BJ (cell line): ENCODE measurements at regions of chr11 and their contacts with region 1.

Region 1: GRCh38 chr11:125345421-125346178 is 150.5 kb downstream of the FEZ1 start:
- DNase-seq: no peak
- H3K4me3 ChIP-seq: no peak overlapping the region
- H3K27me3 ChIP-seq: peaks cover 4% of the 10 kb centered on the region
- CTCF ChIP-seq: peak; percentile 91

Region 2: GRCh38 chr11:125091247-125091876 is 254.2 kb before region 1 on chr11:
- CTCF ChIA-PET with region 1: interaction called, 16 read pairs
- POLR2A ChIA-PET with region 1: no interaction called
- DNase-seq: no peak
- H3K4me3 ChIP-seq: no peak overlapping the region
- H3K27me3 ChIP-seq: no peaks in the 10 kb centered on the region
- CTCF ChIP-seq: peak; percentile 62

Region 3: DNA sequence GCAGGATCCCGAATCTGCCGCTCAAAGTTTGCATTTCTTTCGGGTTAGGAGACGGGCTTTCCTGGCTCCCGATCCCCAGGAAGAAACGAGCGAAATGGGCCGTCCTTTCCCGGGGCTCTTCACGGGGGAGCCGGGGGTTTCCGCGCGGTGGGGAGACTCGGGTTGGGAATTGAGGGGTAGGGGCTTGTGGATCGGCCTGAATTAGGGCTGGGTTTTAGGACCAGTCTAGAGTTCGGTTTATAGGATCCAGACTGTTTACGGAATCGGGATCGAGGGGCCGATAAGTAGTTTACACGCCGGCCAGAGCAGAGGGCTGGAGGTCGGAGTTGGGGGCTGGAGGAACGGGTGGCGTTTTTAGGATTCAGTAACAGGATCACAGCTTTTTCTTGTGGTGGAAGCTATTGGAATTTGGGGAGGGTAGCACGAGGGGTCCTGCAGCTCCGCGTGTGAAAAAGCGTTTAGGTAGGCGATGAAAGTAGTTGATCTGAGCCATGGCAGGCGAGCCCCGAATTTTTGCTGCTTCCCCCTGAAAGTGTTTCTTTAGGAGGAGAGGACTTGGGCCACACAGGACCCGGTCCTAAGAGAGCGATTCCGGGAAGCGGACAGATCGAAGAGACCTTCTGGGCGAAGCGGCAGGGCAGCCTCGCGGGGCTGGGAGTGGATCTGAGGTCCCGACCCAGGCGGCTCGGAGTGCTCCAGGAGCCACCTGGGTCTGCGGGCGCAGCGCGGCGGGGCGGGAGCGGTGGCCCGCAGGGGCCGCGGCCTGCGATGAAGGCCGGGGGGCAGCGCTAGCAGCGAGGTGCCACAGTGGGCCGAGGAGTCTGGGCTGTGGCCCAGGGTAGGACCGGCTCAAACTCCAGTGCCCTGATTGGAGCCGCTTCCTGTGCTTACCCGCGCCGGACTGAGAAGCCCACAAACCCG is 179.5 kb before region 1 on chr11:
- CTCF ChIA-PET with region 1: interaction called, 24 read pairs
- POLR2A ChIA-PET with region 1: no interaction called
- DNase-seq: no peak
- H3K4me3 ChIP-seq: peak overlapping the region; percentile 40
- H3K27me3 ChIP-seq: peaks cover 52% of the 10 kb centered on the region
- CTCF ChIP-seq: no peak

Region 4: DNA sequence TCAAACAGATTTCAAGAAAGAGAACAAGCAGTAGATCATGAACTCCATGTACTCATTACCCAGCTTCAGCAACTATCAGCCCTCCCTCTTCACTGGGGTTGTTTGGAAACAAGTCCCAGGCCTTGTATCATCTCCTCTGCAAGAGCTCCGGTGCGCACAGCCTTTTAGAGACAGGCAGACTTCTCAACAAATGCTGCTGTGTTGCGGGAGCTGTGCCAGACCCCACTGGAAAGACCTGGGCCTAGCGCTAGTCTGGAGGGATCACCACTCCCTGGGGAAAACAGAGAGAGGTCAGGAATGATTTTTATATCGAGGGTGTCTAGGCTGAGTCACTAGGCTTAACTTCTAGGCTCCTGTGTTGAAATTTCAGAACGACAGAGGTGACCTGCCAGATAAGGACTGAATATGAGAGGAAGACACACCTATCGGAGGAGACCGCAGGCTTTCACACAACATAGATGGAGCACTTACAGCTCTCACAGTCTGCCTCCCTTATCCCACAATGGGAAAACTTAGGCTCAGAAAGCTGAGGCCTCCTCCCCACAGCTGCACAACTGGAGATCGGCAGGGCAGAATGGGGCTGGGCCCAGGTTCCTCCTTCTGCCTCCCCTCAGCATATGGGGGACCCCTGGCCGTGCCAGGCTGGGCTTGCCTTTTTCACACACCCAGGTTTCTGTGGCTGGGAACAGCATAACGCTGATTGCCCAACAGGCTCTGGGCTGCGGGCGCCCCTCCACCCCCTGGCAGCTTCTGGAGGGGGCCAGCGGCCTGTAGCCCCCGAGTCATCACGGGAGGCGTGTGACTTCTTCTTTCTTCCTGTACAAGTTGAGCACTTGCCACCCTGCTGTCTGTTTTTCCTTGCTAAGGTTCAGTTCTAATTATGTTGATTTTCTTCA is 95.0 kb before region 1 on chr11:
- CTCF ChIA-PET with region 1: interaction called, 18 read pairs
- POLR2A ChIA-PET with region 1: no interaction called
- DNase-seq: no peak
- H3K4me3 ChIP-seq: no peak overlapping the region
- H3K27me3 ChIP-seq: peaks cover 2% of the 10 kb centered on the region; the same call in 1 of the 2 replicates
- CTCF ChIP-seq: no peak

Region 5: GRCh38 chr11:125329786-125330185 is 15.8 kb before region 1 on chr11:
- CTCF ChIA-PET with region 1: interaction called, 33 read pairs
- POLR2A ChIA-PET with region 1: no interaction called
- DNase-seq: no peak
- H3K4me3 ChIP-seq: no peak overlapping the region
- H3K27me3 ChIP-seq: peaks cover 22% of the 10 kb centered on the region
- CTCF ChIP-seq: no peak

Region 6: DNA sequence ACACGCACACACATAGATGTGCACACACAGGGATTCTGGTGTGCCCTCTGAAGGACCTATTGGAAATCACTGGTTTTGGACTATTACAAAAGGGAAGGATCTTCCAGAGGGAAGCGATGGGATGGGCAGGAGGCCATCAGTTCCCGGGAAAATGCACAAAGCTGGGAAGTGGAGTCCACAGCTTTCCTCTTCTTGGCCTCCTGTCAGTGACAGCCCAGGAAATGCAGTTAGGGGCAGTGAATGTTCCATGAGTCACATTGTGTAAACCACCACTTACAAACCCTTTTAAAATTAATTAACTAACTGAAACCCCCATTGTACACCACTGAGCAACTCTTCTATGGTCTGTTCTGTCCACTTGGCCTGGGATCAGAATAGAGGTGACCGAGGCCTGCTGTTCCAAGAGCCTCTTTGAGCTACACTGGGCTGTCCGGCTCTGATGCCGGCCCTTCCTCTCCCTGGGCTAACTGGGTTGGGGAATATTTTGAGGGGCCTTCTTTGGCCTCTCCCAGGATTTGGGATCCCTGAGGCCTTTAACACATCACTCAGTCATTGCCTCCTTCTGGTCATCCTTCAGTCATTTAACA is 12.7 kb after region 1 on chr11:
- CTCF ChIA-PET with region 1: interaction called, 45 read pairs
- POLR2A ChIA-PET with region 1: no interaction called
- DNase-seq: no peak
- H3K4me3 ChIP-seq: no peak overlapping the region
- H3K27me3 ChIP-seq: no peaks in the 10 kb centered on the region; the same call in 1 of the 2 replicates
- CTCF ChIP-seq: no peak

Region 7: DNA sequence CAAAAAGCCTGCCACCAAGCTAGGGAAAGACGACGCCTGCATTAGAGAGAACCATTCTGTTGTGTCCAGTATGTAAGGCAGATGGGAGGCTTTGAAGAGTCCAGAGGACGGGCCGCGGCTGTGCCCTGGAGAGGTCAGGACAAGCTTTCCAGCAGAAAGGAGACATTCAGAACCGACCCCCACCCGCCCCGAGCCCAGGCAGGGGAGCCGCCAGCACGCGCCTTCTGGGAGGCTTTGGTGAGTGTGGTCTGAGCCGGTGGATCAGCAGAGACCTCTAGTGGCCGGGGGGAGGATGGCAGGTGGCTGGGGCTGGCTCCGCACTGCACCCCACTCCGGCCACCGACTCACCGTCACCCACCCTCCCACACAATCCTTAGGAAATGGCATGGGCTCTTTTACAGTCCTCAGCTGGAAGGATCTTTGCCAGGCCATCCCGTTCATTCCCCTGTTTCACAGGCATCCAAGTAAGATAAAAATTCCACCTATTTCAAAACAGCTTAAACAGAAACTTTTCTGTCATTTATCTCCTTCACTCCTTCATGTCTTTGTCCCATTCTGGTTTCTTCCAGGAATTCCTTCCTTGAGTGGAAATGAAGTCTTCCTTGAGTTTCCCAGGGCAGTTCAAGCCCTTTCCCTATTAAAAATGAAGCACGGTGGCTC is 59.3 kb after region 1 on chr11:
- CTCF ChIA-PET with region 1: interaction called, 36 read pairs
- POLR2A ChIA-PET with region 1: no interaction called
- DNase-seq: no peak
- H3K4me3 ChIP-seq: no peak overlapping the region
- H3K27me3 ChIP-seq: peaks cover 27% of the 10 kb centered on the region
- CTCF ChIP-seq: peak; percentile 98